ENCODE measurements at regions of chr6 and their contacts with region 1.

Region 1: DNA sequence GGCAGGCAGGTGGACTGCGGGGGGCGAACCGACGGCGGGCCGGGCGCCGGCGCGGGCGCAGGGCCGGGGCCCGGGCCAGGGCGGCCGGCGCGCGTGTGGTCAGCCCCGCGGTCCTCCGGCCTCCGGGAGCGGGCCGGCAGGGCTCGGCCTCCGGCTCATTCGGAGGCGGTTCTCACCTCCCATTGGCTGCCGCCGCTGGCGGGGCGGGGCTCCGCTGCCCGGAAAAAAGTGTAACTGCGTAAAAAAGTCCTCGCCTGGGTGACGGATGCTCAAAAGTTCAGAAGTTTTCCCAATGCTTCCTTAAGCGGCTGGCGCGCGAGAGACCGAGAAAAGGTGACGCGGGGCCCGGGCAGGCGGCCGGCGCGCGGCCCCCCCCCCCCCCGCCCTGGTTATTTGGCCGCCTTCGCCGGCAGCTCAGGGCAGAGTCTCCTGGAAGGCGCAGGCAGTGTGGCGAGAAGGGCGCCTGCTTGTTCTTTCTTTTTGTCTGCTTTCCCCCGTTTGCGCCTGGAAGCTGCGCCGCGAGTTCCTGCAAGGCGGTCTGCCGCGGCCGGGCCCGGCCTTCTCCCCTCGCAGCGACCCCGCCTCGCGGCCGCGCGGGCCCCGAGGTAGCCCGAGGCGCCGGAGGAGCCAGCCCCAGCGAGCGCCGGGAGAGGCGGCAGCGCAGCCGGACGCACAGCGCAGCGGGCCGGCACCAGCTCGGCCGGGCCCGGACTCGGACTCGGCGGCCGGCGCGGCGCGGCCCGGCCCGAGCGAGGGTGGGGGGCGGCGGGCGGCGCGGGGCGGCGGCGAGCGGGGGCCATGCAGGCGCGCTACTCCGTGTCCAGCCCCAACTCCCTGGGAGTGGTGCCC is at the start of gene FOXC1:
- DNase-seq: peak; percentile 57
- ATAC-seq: peak; percentile 43
- H3K4me3 Mint-ChIP-seq: peak within 1 kb of the TSS; percentile 78
- H3K27ac Mint-ChIP-seq: peak within 1 kb of the TSS; percentile 35
- H3K4me1 Mint-ChIP-seq: peaks cover 43% of the 10 kb centered on the region
- H3K27me3 Mint-ChIP-seq: peaks cover 57% of the 10 kb centered on the region
- CTCF ChIP-seq: no peak
- total RNA-seq, gene FOXC1: 1.00 and 1.1 TPM in 2 replicates

Region 2: DNA sequence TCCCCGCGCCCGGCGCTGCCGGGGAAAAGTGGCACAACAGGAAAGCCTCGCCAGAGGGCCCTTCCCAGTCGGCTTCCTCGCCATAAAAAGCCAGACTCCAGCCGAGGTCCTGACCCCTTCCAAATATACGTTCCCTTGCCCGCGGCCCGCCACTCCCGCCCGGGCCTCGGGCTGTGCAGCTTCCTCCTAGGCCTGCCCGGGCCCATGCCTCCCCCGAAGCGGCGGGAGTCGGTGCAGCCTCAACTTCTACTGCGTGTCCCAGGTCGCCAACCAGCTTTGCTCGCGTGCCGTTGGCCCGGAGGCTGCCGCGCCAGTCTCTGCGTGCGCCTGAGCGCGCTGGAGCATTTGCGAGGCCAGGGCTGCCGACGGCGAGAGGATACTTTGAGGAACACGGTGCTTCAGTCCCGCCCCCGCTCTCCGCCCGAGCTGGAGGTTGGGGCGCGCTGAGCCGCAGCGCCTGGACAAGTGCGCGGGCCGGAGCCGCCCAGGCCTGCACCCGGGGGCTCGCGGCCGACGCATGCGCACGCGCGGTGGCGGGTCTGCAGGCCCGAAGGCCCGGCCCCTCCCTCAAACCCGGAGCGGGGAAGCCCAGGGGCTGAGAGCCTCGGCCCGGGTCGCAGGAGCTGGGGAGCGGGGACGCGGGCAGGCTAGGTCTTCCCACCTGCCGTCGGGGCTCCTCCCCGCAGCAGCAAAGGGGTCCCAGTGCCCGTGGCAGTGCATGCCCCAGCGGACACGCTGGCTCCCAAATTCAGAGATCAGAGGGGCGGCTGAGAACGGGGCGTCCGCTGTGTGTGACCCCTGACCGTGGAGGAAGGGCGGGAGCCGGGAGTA is 10.0 kb after region 1 on chr6:
- CTCF ChIA-PET with region 1: interaction called, 4 read pairs
- POLR2A ChIA-PET with region 1: interaction called, 12 read pairs
- intact Hi-C with region 1: loop called (anchors 1 kb)
- DNase-seq: peak; percentile 34
- ATAC-seq: peak; percentile 57
- H3K4me3 Mint-ChIP-seq: peak overlapping the region; percentile 48
- H3K27ac Mint-ChIP-seq: no peak overlapping the region
- H3K4me1 Mint-ChIP-seq: peaks cover 8% of the 10 kb centered on the region
- H3K27me3 Mint-ChIP-seq: peaks cover 55% of the 10 kb centered on the region
- CTCF ChIP-seq: no peak

Region 3: DNA sequence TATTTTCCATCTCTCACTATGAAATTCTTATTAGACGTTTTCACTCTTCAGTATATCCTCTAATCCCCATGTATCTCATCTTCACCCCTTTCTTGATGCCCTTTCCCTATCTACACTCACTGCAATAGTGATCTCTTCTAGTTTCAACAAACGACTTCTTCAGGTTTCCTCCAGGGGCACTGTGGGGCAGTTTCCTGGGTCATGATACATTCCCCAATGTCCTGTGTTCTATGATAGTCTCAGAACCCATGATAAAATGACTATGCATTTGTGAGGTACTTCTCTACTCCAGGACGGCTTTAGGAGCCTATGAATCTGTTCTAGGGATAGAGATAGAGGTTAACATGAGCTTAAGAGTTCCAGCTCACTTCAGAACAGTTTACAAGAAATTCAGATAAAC is 183.1 kb after region 1 on chr6:
- CTCF ChIA-PET with region 1: no interaction called
- POLR2A ChIA-PET with region 1: no interaction called
- intact Hi-C with region 1: loop called (anchors 2 kb)
- DNase-seq: no peak
- ATAC-seq: peak; percentile 60
- H3K4me3 Mint-ChIP-seq: no peak overlapping the region
- H3K27ac Mint-ChIP-seq: no peak overlapping the region
- H3K4me1 Mint-ChIP-seq: peaks cover 14% of the 10 kb centered on the region
- H3K27me3 Mint-ChIP-seq: no peaks in the 10 kb centered on the region
- CTCF ChIP-seq: no peak

Region 4: DNA sequence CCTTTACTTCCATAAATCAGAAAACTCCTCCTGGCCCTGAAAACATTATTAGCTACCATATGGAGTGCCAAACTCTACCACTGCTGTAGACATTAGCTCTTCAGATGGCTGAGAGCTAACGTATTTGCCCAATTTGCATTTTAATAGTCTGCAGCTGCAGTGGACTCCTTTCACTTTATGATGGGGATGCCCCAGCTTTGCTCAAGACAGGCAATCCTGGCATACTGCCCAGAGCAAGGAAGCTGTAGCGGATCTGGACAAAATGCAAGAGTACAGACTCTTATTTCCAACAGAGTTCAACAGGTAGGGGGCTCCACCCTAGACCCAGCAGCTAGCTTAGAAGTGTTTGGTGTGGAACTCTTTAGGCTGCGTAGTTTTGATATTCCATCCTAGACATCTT is 246.5 kb after region 1 on chr6:
- CTCF ChIA-PET with region 1: interaction called, 3 read pairs
- POLR2A ChIA-PET with region 1: no interaction called
- intact Hi-C with region 1: loop called (anchors 5 kb)
- DNase-seq: peak; percentile 32
- ATAC-seq: peak; percentile 84
- H3K4me3 Mint-ChIP-seq: peak overlapping the region; percentile 30
- H3K27ac Mint-ChIP-seq: peak overlapping the region; percentile 54
- H3K4me1 Mint-ChIP-seq: peaks cover 36% of the 10 kb centered on the region
- H3K27me3 Mint-ChIP-seq: no peaks in the 10 kb centered on the region
- CTCF ChIP-seq: no peak

Region 5: DNA sequence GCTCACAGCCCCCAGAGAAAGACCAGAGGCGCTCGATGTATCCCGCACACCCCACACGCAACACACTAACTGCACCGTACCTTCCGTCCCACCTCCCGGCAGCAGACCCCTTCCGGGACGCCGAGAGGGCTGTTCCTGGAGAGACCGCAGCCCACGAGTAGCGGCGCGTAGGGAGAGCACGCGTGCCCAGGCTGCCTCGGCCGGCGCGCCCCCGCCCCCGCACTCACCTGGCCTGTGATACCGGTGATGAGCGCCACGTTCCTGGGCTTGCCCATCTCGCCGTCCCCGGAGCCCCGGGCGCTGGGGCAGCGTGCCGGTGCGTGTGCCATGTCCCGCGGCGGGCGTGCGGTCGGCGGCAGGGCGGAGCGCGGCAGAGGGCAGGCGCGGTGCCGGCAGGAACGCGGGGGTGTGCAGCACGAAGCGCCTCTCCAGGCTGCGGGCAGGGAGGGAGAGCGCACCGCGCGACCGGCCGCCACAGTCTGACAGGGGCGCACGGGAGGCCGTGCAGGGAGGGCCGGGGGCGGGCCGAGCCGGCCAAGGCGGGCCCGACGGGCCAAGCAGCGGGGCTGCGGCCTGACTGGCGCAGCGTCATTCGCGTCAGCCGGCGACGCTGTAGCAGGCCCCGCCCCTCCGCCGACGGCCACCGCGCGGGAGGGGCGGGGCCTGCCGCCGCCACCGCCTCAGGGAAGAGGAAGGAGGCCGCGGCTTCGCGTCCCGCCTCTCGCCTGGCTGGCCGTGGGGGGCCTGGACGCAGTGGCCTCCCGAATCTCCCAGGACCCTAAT is 635.4 kb after region 1 on chr6 and contains the start of gene GMDS:
- CTCF ChIA-PET with region 1: no interaction called
- POLR2A ChIA-PET with region 1: no interaction called
- intact Hi-C with region 1: loop called (anchors 2 kb)
- DNase-seq: peak; percentile 83
- ATAC-seq: peak; percentile 96
- H3K4me3 Mint-ChIP-seq: peak within 1 kb of the TSS; percentile 93
- H3K27ac Mint-ChIP-seq: peak within 1 kb of the TSS; percentile 89
- H3K4me1 Mint-ChIP-seq: peaks cover 32% of the 10 kb centered on the region
- H3K27me3 Mint-ChIP-seq: no peaks in the 10 kb centered on the region
- CTCF ChIP-seq: no peak
- total RNA-seq, gene GMDS: 30.1 and 33.7 TPM in 2 replicates